ENCODE measurements at regions of chr15 and their contacts with region 1.

Region 1: DNA sequence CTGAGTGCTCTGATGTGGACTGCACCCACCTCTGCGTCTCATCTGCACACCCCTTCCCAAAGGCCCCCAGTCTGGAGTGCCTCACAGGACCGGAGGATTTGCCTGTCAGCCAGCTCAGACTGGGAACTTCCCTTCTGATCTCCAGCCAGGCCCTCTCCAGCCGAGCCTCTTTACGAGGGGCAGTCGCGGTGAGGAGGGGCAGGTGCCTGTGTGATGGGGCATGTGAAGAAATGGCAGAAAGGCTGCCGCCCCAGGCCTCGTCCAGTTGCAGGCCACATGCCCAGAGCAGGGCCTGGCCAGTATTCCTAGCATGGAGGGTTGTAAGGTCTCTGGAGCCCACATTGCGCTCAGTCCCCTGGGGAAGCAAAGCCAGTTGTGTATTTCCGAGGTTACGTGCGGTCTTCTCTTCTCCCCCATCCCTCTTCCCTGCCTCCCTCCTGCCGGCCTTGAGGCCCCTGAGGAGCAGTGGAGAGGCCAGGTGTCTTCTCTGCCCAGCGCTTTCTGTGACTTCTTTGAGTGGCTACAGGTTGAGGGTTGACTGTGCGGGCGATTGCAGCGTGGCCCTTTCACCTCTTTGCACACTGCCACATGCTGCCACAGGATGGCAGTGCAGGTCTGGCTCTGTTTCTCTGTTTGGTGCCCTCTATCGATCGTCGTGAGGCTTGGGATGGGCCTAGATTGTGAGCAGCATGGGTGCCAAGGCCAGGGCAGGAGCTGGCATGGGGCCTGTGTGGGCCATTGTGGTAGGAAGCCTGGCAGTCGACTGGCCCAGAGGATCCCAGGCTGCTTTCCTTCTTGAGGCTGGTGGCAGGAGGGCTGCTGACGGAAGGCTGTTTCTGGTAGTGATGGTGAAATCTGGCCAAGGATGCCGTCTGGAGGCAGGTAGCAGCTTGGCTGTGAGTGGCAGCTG is 5.3 kb downstream of the CLK3 start:
- DNase-seq: peak; percentile 86 to 92
- H3K4me3 ChIP-seq: no peak overlapping the region
- H3K4me1 ChIP-seq: peaks cover 12% of the 10 kb centered on the region
- H3K27me3 ChIP-seq: no peaks in the 10 kb centered on the region

Region 2: DNA sequence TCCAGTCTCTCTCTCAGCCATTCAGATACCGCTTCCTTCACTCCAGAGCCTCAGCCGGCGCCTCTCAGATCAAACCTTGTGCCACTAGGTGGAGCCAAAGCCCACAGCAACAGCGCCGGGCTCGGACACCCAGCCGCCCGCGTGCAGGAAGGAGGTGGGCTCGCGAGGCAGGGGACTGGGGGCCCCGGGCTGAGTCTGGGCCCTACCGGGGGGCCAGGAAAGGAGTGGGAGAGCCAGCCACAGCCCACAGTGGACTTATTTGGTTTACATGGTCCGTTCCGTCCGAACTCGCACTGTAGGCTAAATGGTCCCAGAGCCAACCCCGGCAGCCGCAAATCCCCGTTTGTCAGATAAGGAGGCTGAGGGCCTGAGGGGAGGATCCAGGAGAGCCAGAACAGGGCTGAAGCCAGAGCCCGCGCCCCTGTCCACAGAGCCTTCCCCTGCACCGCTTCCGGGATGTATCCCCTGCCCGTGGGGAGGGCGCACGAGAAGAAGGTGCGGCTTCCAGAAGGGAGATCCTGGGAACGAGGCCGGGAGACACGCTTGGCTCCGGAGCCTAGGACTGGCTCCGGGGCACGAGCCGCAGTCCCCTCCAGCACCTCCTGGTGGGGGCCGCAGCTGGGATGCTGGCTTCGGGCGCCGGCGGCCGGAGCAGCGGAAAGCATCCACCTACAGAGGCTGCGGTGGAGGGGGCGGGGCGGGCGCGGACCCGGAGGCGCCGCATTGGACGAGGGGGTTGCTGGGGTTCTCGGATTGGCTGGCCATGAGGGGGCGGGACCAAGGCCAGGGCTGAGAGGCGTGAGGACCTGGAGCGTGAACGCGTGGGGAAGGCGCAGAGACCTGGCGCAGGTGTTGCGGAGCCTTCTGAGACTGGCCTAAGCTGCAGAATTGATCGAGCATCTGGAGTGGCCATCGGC is 246.9 kb before region 1 on chr15:
- in situ Hi-C with region 1: loop called (anchors 5 kb)
- DNase-seq: peak; percentile 99 to 100
- H3K4me3 ChIP-seq: peak overlapping the region; percentile 47
- H3K4me1 ChIP-seq: peaks cover 15% of the 10 kb centered on the region
- H3K27me3 ChIP-seq: peaks cover 28% of the 10 kb centered on the region

Region 3: GRCh38 chr15:74816808-74817674 is 196.2 kb after region 1 on chr15:
- in situ Hi-C with region 1: no loop called
- DNase-seq: peak; percentile 53 to 78
- H3K4me3 ChIP-seq: no peak overlapping the region
- H3K4me1 ChIP-seq: no peaks in the 10 kb centered on the region; the same call in 1 of the 2 replicates
- H3K27me3 ChIP-seq: peaks cover 8% of the 10 kb centered on the region; the same call in 1 of the 2 replicates

Region 4: DNA sequence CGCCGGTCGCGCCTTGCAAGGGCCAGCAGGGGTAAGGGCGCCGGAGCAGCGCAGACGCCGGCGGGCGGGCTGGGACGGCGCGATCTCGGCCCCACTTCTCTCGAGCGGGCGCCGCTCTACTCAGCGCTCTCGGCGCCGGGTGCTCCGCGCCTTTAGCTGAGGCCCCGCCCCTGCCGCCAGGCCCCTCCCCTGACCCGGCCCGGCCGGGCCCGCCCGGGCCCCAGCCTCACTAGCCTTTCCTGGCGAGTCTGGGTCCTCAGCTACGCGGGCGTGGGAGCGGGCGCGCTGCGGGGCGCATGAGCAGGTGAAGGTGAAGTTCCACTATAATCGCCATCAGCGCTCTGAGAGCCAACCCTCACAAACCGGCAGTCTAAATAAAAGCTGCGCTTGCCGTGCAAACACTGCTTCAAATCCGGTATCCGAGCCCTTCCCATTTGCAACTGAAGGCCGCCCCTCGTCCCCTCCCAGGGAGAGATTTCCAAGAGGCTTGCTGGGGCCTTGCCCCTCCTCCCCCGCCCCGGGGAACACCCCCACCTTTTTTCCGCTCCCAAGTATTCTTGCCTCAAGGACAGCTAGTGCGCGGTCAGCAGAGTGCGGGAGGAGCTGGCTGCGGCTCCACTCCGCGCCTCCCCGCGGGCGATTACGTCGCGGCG is 335.9 kb after region 1 on chr15 and contains the start of gene RPP25:
- in situ Hi-C with region 1: loop called (anchors 5 kb)
- DNase-seq: peak; percentile 94 to 96
- H3K4me3 ChIP-seq: peak within 1 kb of the TSS; percentile 28
- H3K4me1 ChIP-seq: peaks cover 47% of the 10 kb centered on the region
- H3K27me3 ChIP-seq: no peaks in the 10 kb centered on the region

Region 5: GRCh38 chr15:75565062-75565970 is 944.4 kb after region 1 on chr15:
- in situ Hi-C with region 1: no loop called
- DNase-seq: no peak
- H3K4me3 ChIP-seq: no peak overlapping the region
- H3K4me1 ChIP-seq: no peaks in the 10 kb centered on the region
- H3K27me3 ChIP-seq: no peaks in the 10 kb centered on the region

Measured in HAP-1 (cell line).